Activated CD4-positive, alpha-beta memory T cell treated with anti-CD3 and anti-CD28 coated beads for 36 hours (primary cell): ENCODE measurements at regions of chr10 and their contacts with region 1.

Region 1: DNA sequence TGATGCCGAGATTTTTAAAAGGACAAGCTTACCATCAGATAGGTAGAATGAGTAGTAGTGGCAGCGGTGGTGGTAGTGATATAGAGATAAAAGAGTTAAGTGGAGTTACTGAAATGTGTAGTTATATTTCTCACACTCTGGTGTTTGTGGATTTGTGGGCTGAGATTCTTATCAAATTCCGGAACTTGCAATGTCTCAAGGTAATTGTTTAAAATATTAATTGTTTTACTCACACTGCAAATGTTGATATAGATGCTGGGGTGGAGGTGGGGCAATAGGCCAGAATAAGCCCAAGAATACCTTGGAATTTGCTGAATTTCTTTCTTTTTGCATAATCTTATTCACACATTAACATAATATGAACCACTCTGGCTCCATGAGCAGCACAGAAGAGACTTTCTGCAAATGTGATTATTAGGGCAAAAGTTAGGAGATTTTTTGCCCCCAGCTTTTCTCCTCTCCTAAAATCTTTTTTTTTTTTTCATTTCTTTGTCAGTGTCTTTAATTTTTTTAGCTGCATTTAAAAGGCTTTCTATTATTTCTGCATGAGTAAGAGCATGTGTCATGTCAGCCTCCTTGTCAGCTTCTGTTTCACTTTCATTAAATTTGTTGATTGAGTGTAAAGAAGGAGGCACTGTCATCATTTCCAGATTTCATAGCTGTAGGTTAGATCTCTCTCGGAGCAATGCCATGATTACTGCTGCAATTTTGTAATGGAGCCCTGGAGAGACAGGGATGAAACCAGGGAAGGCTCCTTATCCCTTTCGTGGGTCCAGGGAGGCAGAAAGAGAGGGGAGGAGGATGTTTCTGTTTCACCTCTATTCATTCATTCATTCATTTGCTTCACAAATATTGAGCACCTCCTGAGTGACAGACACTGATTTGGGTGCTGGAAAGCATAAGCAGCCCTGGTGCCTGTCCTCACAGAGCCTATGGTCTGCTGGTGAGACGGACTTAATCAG is 13.1 kb upstream of the SGMS1 start:
- DNase-seq: peak; percentile 44
- H3K4me3 Mint-ChIP-seq: no peak overlapping the region
- H3K27ac Mint-ChIP-seq: peak overlapping the region; percentile 50
- H3K4me1 Mint-ChIP-seq: peaks cover 33% of the 10 kb centered on the region
- H3K27me3 Mint-ChIP-seq: peaks cover 34% of the 10 kb centered on the region

Region 2: GRCh38 chr10:50260791-50261281 is 376.1 kb before region 1 on chr10:
- CTCF ChIA-PET with region 1: no interaction called
- POLR2A ChIA-PET with region 1: no interaction called
- intact Hi-C with region 1: loop called (anchors 5 kb)
- DNase-seq: peak; percentile 15
- H3K4me3 Mint-ChIP-seq: no peak overlapping the region
- H3K27ac Mint-ChIP-seq: no peak overlapping the region
- H3K4me1 Mint-ChIP-seq: peaks cover 2% of the 10 kb centered on the region
- H3K27me3 Mint-ChIP-seq: peaks cover 33% of the 10 kb centered on the region

Region 3: DNA sequence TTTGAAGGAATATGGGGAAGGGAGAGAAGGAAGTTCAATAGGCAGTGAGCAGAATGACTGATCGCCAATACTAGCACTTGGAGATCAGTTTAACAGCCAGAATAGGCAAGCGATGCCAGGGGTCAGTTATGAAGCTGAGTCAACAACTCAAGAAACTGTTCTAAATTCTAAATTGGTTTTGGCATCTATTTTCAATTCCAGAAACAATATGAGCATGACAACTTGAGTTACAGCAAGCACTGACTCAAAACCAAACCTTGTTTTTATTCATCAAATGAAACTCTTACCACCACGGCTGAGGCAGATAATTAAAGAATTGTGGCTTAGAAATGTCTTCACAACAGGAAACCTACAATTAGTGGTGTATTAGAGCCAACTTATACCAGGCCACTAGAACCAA is 205.1 kb before region 1 on chr10:
- CTCF ChIA-PET with region 1: interaction called, 4 read pairs
- POLR2A ChIA-PET with region 1: interaction called, 11 read pairs
- intact Hi-C with region 1: loop called (anchors 1 kb)
- DNase-seq: peak; percentile 39
- H3K4me3 Mint-ChIP-seq: no peak overlapping the region
- H3K27ac Mint-ChIP-seq: no peak overlapping the region
- H3K4me1 Mint-ChIP-seq: peaks cover 31% of the 10 kb centered on the region
- H3K27me3 Mint-ChIP-seq: no peaks in the 10 kb centered on the region

Region 4: GRCh38 chr10:50540069-50540825 is 96.7 kb before region 1 on chr10:
- CTCF ChIA-PET with region 1: no interaction called
- POLR2A ChIA-PET with region 1: interaction called, 4 read pairs
- intact Hi-C with region 1: loop called (anchors 1 kb)
- DNase-seq: peak; percentile 70
- H3K4me3 Mint-ChIP-seq: peak overlapping the region; percentile 36
- H3K27ac Mint-ChIP-seq: peak overlapping the region; percentile 75
- H3K4me1 Mint-ChIP-seq: peaks cover 86% of the 10 kb centered on the region
- H3K27me3 Mint-ChIP-seq: no peaks in the 10 kb centered on the region

Region 5: GRCh38 chr10:51699475-51700227 is 1062.8 kb after region 1 on chr10 and contains the start of gene CSTF2T:
- CTCF ChIA-PET with region 1: no interaction called
- POLR2A ChIA-PET with region 1: no interaction called
- intact Hi-C with region 1: loop called (anchors 5 kb)
- DNase-seq: peak; percentile 94
- H3K4me3 Mint-ChIP-seq: peak within 1 kb of the TSS; percentile 95
- H3K27ac Mint-ChIP-seq: peak within 1 kb of the TSS; percentile 100
- H3K4me1 Mint-ChIP-seq: peaks cover 48% of the 10 kb centered on the region
- H3K27me3 Mint-ChIP-seq: no peaks in the 10 kb centered on the region
- total RNA-seq, gene CSTF2T: 26.4 TPM